ENCODE measurements at regions of chrX and their contacts with region 1.

Region 1: DNA sequence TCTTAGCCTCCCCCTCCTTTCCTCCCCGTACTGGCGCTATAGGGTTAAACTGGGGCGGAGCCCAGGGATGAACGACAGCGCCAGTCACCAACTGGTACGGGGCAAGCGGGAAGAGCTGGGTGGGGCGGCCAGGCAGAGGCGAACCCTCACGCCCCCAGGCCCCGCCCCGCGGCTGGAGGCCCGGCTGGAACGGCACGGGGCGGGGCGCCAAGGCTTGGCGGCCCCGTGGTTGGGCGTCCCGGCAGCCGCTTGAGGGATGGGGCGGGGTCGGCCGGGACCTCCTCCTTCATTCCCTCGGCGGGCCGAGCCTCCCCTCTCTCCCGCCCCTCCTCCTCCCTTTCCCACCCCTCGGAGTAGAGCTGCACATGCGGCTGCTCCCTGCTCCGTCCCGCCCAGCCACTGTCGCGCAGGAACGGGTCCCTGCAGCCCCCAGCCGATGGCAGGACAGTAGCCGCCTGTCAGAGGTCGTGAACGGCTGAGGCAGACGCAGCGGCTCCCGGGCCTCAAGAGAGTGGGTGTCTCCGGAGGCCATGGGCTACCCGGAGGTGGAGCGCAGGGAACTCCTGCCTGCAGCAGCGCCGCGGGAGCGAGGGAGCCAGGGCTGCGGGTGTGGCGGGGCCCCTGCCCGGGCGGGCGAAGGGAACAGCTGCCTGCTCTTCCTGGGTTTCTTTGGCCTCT is at the start of gene EDA:
- DNase-seq: peak; percentile 91 to 93
- ATAC-seq: peak; percentile 95
- H3K4me3 ChIP-seq: peak within 1 kb of the TSS; percentile 26 to 62
- H3K27ac ChIP-seq: no peak within 1 kb of the TSS
- H3K4me1 ChIP-seq: no peaks in the 10 kb centered on the region
- H3K27me3 ChIP-seq: no peaks in the 10 kb centered on the region
- total RNA-seq, gene EDA: 4.6 to 9.0 TPM

Region 2: DNA sequence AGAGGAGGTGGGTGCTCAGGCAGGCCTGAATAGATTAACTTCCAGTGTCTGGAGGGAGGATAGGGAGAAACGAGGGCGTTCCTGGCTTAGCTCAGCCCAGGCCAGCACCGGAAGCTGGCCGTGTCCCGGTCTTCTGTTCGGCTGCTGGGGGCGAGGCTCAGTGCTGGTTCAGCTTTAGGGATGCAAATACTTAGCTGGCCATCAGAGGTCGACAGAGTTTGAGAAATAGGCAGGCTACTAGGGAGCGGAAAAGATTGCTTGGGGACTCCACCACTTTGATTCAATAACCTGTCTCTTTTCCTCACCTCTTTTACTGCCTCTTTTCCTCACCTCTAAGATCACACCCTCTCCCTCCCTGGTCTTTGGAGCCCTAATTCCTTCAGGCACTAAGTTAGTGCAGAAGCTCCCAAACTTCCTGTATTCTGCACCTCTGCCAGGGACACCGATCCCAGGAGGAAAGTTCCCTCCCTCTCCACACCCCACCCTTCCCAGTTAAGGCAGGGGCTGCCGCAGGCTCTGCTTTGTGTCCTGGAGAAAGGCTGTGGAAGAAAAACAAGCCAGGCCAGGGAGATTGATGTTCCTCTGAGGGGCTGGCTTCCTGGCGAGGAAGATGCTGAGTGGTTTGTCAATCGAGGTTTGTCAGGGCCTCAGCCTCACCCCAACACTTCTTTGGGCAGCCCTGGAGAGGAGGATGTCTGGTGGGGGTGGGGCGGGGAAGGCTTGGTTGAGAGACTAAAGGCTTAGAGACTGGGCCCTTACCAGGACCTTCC is 793.1 kb before region 1 on chrX:
- intact Hi-C with region 1: loop called in 1 of 2 experiments (anchors 5 kb)
- DNase-seq: peak; percentile 65 to 79
- ATAC-seq: peak; percentile 64
- H3K4me3 ChIP-seq: no peak overlapping the region
- H3K27ac ChIP-seq: no peak overlapping the region
- H3K4me1 ChIP-seq: no peaks in the 10 kb centered on the region
- H3K27me3 ChIP-seq: no peaks in the 10 kb centered on the region

Region 3: DNA sequence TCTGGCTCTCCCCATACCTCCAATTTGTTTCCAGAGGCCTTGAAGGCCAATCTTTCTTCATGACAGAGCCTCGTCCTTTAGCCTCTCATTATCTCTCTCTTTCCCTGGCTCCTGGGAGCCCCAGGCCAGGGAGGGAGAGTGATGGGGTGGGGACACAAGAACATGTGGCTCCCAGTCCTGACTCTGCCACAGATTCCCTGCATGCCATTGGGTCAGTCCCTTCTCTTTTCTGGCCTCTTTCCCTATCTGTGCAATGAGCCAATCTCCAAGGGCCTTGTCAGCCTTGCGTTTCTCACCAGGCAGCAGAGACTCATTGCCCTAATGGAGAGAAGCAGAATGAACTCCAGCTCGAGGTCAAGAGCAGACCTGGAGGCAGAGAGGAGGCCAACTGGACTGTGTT is 412.3 kb before region 1 on chrX:
- intact Hi-C with region 1: no loop called
- DNase-seq: peak in 1 of 2 donors; percentile 4
- ATAC-seq: no peak
- H3K4me3 ChIP-seq: no peak overlapping the region
- H3K27ac ChIP-seq: no peak overlapping the region
- H3K4me1 ChIP-seq: no peaks in the 10 kb centered on the region
- H3K27me3 ChIP-seq: no peaks in the 10 kb centered on the region

Region 4: GRCh38 chrX:69262036-69262936 is 353.6 kb before region 1 on chrX:
- intact Hi-C with region 1: no loop called
- DNase-seq: peak in 1 of 2 donors; percentile 50
- ATAC-seq: no peak
- H3K4me3 ChIP-seq: no peak overlapping the region
- H3K27ac ChIP-seq: no peak overlapping the region
- H3K4me1 ChIP-seq: no peaks in the 10 kb centered on the region
- H3K27me3 ChIP-seq: no peaks in the 10 kb centered on the region

Region 5: GRCh38 chrX:69524781-69525363 is 91.0 kb before region 1 on chrX:
- intact Hi-C with region 1: no loop called
- DNase-seq: peak in 1 of 2 donors; percentile 23
- ATAC-seq: no peak
- H3K4me3 ChIP-seq: no peak overlapping the region
- H3K27ac ChIP-seq: no peak overlapping the region
- H3K4me1 ChIP-seq: no peaks in the 10 kb centered on the region
- H3K27me3 ChIP-seq: peaks cover 0 to 2% of the 10 kb centered on the region in 2 donors

Region 6: GRCh38 chrX:69538321-69538876 is 77.5 kb before region 1 on chrX:
- intact Hi-C with region 1: loop called in 1 of 2 experiments (anchors 5 kb)
- DNase-seq: peak; percentile 84 to 93
- ATAC-seq: peak; percentile 89
- H3K4me3 ChIP-seq: no peak overlapping the region
- H3K27ac ChIP-seq: no peak overlapping the region
- H3K4me1 ChIP-seq: no peaks in the 10 kb centered on the region
- H3K27me3 ChIP-seq: no peaks in the 10 kb centered on the region

Region 7: GRCh38 chrX:69932323-69932722 is 316.4 kb after region 1 on chrX:
- intact Hi-C with region 1: no loop called
- DNase-seq: no peak
- ATAC-seq: no peak
- H3K4me3 ChIP-seq: no peak overlapping the region
- H3K27ac ChIP-seq: no peak overlapping the region
- H3K4me1 ChIP-seq: no peaks in the 10 kb centered on the region
- H3K27me3 ChIP-seq: no peaks in the 10 kb centered on the region

Region 8: GRCh38 chrX:70133303-70134115 is 517.6 kb after region 1 on chrX and contains the start of gene IGBP1:
- intact Hi-C with region 1: loop called in 1 of 2 experiments (anchors 10 kb)
- DNase-seq: peak; percentile 86 to 94
- ATAC-seq: peak; percentile 93
- H3K4me3 ChIP-seq: peak within 1 kb of the TSS; percentile 39 to 97
- H3K27ac ChIP-seq: peak within 1 kb of the TSS in 1 of 2 donors; percentile 86
- H3K4me1 ChIP-seq: peaks cover 0 to 2% of the 10 kb centered on the region in 2 donors
- H3K27me3 ChIP-seq: no peaks in the 10 kb centered on the region
- total RNA-seq, gene IGBP1: 34.4 to 45.9 TPM